Sciatic nerve (tissue), 2 donors: ENCODE measurements at regions of chr18 and their contacts with region 1.

Region 1: GRCh38 chr18:66826211-66826610 is 222.3 kb upstream of the CDH19 start:
- DNase-seq: no peak
- ATAC-seq: no peak

Region 2: GRCh38 chr18:66813138-66813537 is 13.1 kb before region 1 on chr18:
- intact Hi-C with region 1: loop called (anchors 1 kb)
- DNase-seq: no peak
- ATAC-seq: no peak

Region 3: DNA sequence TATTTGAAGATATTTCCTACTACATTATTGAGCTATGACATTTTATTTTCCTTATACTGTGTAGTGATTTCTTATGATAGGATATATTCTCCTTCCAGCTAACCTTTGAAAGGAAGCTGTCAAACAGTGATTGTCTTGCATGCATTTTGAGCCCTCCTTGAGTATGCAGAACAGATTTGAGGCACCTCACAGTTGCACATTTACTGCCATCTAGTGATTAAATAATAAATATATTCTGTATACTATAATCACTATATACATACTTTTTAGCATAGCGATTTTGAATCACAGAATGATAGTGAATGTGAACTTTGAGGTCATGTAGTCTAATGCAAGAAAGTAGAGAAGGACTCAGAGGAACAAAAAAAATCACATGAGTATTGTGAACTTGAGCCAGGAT is 46.1 kb after region 1 on chr18:
- intact Hi-C with region 1: no loop called
- DNase-seq: no peak
- ATAC-seq: no peak

Region 4: DNA sequence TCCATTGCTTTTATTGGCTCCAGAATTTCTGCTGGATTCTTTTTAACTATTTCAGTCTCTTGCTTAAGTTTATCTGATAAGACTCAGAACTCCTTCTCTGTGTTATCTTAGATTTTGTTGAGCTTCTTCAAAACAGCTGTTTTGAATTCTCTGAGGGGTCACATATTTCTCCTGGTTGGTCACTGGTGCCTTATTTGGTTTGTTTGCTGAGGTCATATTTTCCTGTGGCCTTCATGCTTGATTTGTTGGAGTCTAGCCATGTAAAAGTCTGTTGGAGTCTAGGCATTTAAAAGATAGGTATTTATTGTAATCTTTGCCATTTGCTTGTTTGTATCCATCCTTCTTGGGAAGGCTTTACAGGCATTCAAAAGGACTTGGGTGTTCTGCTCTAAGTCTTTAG is 291.6 kb after region 1 on chr18:
- intact Hi-C with region 1: no loop called
- DNase-seq: no peak
- ATAC-seq: no peak

Region 5: GRCh38 chr18:67977067-67977616 is 1150.9 kb after region 1 on chr18:
- intact Hi-C with region 1: no loop called
- DNase-seq: no peak
- ATAC-seq: no peak

Region 6: GRCh38 chr18:67995769-67996168 is 1169.6 kb after region 1 on chr18:
- intact Hi-C with region 1: no loop called
- DNase-seq: no peak
- ATAC-seq: no peak